ENCODE measurements at regions of chr2 and their contacts with region 1.

Region 1: GRCh38 chr2:160224060-160224459 is 24.0 kb upstream of the ITGB6 start:
- DNase-seq: no peak
- H3K4me3 Mint-ChIP-seq: no peak overlapping the region
- H3K27ac Mint-ChIP-seq: peak overlapping the region; percentile 76
- H3K4me1 Mint-ChIP-seq: peaks cover 45% of the 10 kb centered on the region
- H3K27me3 Mint-ChIP-seq: peaks cover 10% of the 10 kb centered on the region

Region 2: DNA sequence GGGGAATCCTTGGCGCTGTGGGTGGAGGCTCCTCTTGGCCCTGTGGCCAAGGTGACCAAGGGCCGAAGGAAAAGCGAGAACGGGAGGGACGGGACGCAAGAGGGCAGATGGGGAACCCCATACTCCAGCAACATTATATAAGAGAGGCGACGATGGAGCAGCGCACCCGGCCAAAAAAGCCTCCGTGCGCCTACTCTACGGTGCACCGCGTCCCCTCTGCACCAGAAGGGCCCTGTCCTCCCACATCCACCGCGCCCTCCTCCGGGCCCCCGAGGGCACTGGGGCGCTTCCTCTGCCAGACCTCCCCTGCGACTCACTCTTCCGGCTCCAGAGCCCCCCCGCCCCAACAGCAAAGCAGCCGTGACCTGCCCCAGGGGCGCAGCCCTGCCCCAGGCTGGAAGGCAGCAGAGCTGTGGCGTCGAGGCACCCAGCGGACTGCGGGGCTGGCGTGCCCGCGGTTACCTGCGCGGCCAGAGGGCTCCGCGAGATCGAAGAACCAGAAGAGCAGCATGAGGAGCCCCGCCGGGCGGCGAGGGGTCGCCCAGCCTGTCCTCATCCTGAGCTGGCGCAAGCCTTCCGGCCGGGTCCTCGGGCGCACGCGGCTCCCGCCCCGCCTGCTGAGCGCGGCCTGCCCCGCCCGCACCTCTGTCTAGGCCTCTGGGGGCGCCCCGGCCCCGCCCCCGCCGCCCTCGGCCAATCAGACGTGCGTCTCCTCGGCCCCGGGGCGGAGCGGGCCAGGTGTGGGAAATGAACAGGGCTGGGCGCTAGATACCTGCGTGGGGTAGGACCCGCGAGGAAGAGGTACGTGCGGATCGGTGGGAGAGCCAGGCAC is 319.7 kb before region 1 on chr2:
- intact Hi-C with region 1: loop called (anchors 10 kb)
- DNase-seq: peak; percentile 71
- H3K4me3 Mint-ChIP-seq: peak within 1 kb of the TSS; percentile 94
- H3K27ac Mint-ChIP-seq: peak within 1 kb of the TSS; percentile 93
- H3K4me1 Mint-ChIP-seq: peaks cover 61% of the 10 kb centered on the region
- H3K27me3 Mint-ChIP-seq: no peaks in the 10 kb centered on the region

Region 3: DNA sequence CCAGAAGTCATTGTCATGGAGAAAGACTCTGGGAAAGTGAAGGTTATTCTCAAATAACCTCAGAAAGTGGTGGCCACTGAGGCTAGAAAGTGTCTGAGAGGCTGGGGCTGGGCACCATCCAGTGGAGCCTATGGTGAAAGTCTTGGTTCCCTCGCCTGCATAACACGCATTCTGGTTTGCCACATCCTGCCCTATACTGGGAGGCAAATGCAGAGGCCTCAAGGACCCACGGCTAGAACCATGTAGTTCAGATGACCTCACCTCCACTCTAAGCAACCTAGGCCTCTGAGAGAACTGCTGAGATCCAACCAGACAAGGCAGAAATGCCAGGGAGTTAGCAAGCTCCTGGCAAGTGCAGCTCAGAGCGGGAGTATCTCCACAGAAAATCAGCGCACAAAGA is 29.1 kb before region 1 on chr2:
- intact Hi-C with region 1: no loop called
- DNase-seq: no peak
- H3K4me3 Mint-ChIP-seq: no peak overlapping the region
- H3K27ac Mint-ChIP-seq: no peak overlapping the region
- H3K4me1 Mint-ChIP-seq: peaks cover 4% of the 10 kb centered on the region
- H3K27me3 Mint-ChIP-seq: peaks cover 12% of the 10 kb centered on the region

Region 4: GRCh38 chr2:160269803-160270570 is 45.9 kb after region 1 on chr2:
- intact Hi-C with region 1: loop called (anchors 2 kb)
- DNase-seq: peak; percentile 31
- H3K4me3 Mint-ChIP-seq: peak overlapping the region; percentile 56
- H3K27ac Mint-ChIP-seq: no peak overlapping the region
- H3K4me1 Mint-ChIP-seq: peaks cover 45% of the 10 kb centered on the region
- H3K27me3 Mint-ChIP-seq: peaks cover 22% of the 10 kb centered on the region

Region 5: GRCh38 chr2:160317181-160318099 is 93.4 kb after region 1 on chr2:
- intact Hi-C with region 1: no loop called
- DNase-seq: no peak
- H3K4me3 Mint-ChIP-seq: no peak overlapping the region
- H3K27ac Mint-ChIP-seq: no peak overlapping the region
- H3K4me1 Mint-ChIP-seq: peaks cover 11% of the 10 kb centered on the region
- H3K27me3 Mint-ChIP-seq: peaks cover 5% of the 10 kb centered on the region

Region 6: DNA sequence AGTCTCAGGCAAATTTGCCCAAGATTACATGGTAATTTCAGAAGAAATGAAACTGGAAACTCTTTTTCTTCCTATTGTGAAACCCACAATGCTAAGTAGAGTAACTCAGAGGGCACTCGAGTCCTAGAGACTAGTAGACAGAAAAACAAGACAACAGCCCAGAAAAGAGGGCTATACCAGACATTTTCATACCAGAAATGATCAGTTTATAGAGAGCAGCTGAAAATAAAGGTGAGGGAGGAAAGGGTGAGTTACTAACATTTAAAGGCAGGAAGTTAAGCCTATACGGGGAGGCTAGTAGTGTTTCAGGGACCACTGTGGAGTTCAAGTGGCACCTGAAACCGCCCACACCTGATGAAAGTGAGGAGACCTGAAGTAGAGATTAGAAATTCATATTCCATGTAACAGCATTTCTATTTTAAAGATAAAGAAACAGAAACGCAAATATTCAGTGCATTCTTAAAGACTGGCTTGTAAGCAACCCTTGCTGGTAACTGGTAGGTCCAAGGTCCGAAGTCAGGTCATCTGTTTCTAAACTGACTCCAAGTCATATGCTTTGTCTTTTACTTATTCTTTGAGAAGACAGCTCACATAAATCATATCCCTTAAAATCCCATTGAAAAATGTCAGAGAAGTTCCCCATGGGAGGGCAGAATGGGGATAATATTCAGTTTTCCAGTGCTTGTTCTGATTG is 121.2 kb after region 1 on chr2:
- intact Hi-C with region 1: loop called (anchors 5 kb)
- DNase-seq: no peak
- H3K4me3 Mint-ChIP-seq: peak overlapping the region; percentile 40
- H3K27ac Mint-ChIP-seq: peak overlapping the region; percentile 75
- H3K4me1 Mint-ChIP-seq: peaks cover 25% of the 10 kb centered on the region
- H3K27me3 Mint-ChIP-seq: no peaks in the 10 kb centered on the region

Region 7: DNA sequence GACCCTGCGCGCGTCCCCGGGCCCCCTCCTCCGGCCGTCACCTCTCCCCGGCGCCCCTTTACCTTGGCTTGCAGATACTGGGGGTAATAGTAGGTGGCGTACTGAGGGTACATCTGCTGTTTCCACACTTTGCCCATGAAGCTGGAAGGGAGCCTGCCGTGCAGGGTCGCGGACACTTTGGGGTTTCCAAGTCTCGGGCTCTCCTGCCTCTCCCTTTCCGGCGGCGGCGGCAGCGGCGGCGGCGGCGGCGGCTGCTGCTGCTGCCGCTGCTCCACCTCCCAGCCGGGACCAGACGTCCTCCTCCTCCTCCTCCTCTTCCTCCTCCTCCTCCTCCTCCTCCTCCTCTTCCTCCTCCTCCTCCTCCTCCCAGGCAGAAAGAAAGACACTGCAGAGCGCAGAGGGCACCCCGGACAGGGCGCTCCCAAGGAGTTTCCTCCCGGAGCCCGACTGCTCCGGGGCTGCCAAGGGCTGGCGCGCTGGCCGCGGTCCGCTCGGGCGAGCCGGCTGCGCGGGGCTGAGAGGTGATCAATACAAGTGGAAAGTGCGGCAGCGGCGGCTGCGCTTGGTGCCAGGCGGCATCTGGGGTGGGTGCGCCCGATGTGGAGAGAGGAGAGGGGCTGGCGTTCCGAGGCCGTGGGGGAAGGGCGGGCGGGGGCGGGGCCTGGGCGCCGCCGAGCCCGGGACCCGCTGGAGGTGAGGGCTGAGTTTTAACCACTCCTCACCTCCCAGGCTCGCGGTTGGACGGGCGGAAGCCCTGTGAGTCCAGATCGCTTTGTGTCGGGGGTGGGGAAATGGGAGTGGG is 269.4 kb after region 1 on chr2 and contains the start of gene RBMS1:
- intact Hi-C with region 1: loop called (anchors 5 kb)
- DNase-seq: peak; percentile 35
- H3K4me3 Mint-ChIP-seq: peak within 1 kb of the TSS; percentile 93
- H3K27ac Mint-ChIP-seq: peak within 1 kb of the TSS; percentile 91
- H3K4me1 Mint-ChIP-seq: peaks cover 43% of the 10 kb centered on the region
- H3K27me3 Mint-ChIP-seq: peaks cover 28% of the 10 kb centered on the region
- total RNA-seq, gene RBMS1: 40.1 and 42.2 TPM in 2 replicates

Region 8: DNA sequence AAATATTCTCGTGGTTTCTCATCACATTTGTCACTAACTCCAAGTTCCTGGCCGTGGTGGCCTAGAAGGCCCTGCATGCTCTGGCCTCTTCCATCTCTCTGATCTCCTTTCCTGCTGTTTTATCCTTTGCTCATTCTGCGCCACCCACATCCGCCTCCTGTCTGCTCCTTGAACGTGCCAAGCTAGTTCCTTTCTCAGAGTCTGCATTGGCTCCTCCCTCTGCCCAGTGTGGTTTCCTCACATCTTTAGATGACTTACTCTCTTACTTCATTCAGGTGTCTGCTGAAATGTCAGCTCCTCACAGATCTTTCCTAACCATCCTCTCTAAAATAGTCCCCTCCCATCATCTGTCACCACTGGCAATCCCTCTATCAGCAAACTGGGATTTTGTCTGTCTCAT is 428.2 kb after region 1 on chr2:
- intact Hi-C with region 1: loop called (anchors 2 kb)
- DNase-seq: peak; percentile 55
- H3K4me3 Mint-ChIP-seq: peak overlapping the region; percentile 6
- H3K27ac Mint-ChIP-seq: peak overlapping the region; percentile 10
- H3K4me1 Mint-ChIP-seq: peaks cover 26% of the 10 kb centered on the region
- H3K27me3 Mint-ChIP-seq: peaks cover 14% of the 10 kb centered on the region